Heart left ventricle (tissue), 16 donors: ENCODE measurements at regions of chr6 and their contacts with region 1.

Region 1: DNA sequence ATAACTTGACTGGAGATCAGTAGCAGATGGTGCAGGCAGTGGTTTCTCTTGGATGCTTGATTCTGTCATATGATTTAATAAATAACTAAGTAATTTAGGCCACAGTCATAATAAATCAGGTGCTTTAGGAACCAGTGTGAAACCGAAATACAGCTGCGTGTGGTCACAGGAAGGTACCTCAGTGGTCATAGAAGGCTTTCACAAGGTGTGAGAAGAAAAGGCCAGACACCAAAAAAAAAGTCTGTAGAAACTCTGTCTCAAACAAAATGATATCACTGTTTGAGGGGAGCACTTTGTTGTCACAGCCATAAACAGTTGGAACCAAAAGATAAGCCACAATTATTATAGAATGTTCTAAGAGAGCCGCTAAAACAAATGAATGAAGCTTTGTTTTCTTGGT is 56.5 kb downstream of the ARMC2 start:
- DNase-seq: no peak
- ATAC-seq: no peak
- H3K4me3 ChIP-seq: no peak overlapping the region
- H3K27ac ChIP-seq: peak overlapping the region in 2 of 12 donors; percentile 2 to 4
- H3K4me1 ChIP-seq: peaks cover 0 to 54% (median 7%) of the 10 kb centered on the region in 12 donors
- H3K27me3 ChIP-seq: no peaks in the 10 kb centered on the region
- CTCF ChIP-seq: no peak
- POLR2A ChIP-seq: no peak

Region 2: DNA sequence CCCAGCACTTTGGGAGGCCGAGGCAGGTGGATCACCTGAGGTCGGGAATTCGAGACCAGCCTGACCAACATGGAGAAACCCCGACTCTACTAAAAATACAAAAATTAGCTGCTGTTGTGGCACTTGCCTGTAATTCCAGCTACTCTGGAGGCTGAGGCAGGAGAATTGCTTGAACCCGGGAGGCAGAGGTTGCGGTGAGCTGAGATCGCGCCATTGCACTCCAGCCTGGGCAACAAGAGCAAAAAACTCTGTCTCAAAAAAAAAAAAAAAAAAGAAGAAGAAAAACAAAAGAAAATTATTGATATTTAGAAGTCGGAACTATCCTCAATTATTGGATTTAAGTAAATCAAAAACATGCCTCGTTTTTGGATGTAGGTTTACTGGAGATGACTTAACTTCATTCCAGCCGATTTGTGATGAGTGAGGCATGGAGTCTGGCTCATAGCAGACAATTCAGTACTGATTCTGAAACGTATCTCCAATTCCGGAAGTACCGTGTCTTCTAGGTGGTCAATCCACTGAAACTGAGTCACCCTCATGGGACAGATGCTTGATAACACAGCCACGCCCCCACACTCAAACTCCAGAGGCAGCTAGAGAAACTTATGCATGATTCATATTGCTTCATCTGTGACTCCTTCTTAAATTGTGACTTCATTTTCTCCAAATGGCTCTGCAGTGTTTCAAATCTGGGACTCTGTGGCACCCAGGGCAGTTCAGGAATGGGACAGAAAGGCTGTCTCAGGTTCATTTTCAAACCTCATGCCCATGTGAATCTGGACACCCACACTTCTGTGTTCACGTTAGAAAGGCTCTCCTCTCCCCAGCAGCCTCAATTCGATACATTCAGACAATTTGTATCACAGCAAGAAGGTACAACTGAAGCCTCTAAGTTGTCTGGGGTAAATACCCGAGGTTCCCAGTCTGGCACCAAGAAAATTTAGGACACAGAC is 166.9 kb before region 1 on chr6:
- intact Hi-C with region 1: no loop called
- DNase-seq: peak in 2 of 5 donors; percentile 54 to 77
- ATAC-seq: peak in 3 of 4 donors; percentile 50 to 88 (median 60)
- H3K4me3 ChIP-seq: peak overlapping the region in 1 of 12 donors; percentile 13
- H3K27ac ChIP-seq: peak overlapping the region in 3 of 12 donors; percentile 4 to 67 (median 31)
- H3K4me1 ChIP-seq: peaks cover 0 to 30% (median 5%) of the 10 kb centered on the region in 12 donors
- H3K27me3 ChIP-seq: no peaks in the 10 kb centered on the region
- CTCF ChIP-seq: no peak
- POLR2A ChIP-seq: no peak

Region 3: GRCh38 chr6:109009236-109009961 is 104.7 kb after region 1 on chr6:
- intact Hi-C with region 1: loop called in 1 of 10 experiments (anchors 10 kb)
- DNase-seq: peak; percentile 95 to 98 (median 96)
- ATAC-seq: peak; percentile 86 to 99 (median 96)
- H3K4me3 ChIP-seq: peak overlapping the region; percentile 61 to 93 (median 85)
- H3K27ac ChIP-seq: peak overlapping the region; percentile 85 to 98 (median 93)
- H3K4me1 ChIP-seq: peaks cover 0 to 84% (median 37%) of the 10 kb centered on the region in 12 donors
- H3K27me3 ChIP-seq: no peaks in the 10 kb centered on the region
- CTCF ChIP-seq: peak in 9 of 12 donors; percentile 8 to 50 (median 29)
- POLR2A ChIP-seq: peak; percentile 73 to 96